ENCODE measurements at regions of chr22 and their contacts with region 1.

Region 1: GRCh38 chr22:31802575-31802974 is 48.8 kb downstream of the DEPDC5 start:
- DNase-seq: no peak
- ATAC-seq: no peak
- H3K4me3 ChIP-seq: no peak overlapping the region
- H3K27ac ChIP-seq: no peak overlapping the region
- H3K4me1 ChIP-seq: no peaks in the 10 kb centered on the region
- H3K27me3 ChIP-seq: no peaks in the 10 kb centered on the region
- CTCF ChIP-seq: no peak

Region 2: GRCh38 chr22:31768422-31769059 is 34.0 kb before region 1 on chr22:
- CTCF ChIA-PET with region 1: no interaction called
- POLR2A ChIA-PET with region 1: no interaction called
- in situ Hi-C with region 1: no loop called
- intact Hi-C with region 1: no loop called
- DNase-seq: no peak
- ATAC-seq: no peak
- H3K4me3 ChIP-seq: no peak overlapping the region
- H3K27ac ChIP-seq: no peak overlapping the region
- H3K4me1 ChIP-seq: no peaks in the 10 kb centered on the region
- H3K27me3 ChIP-seq: no peaks in the 10 kb centered on the region
- CTCF ChIP-seq: no peak

Region 3: GRCh38 chr22:31812977-31813605 is 10.5 kb after region 1 on chr22:
- CTCF ChIA-PET with region 1: no interaction called
- POLR2A ChIA-PET with region 1: interaction called, 13 read pairs
- in situ Hi-C with region 1: no loop called
- intact Hi-C with region 1: no loop called
- DNase-seq: no peak
- ATAC-seq: no peak
- H3K4me3 ChIP-seq: no peak overlapping the region
- H3K27ac ChIP-seq: no peak overlapping the region
- H3K4me1 ChIP-seq: no peaks in the 10 kb centered on the region
- H3K27me3 ChIP-seq: no peaks in the 10 kb centered on the region
- CTCF ChIP-seq: no peak

Region 4: GRCh38 chr22:31841078-31841827 is 38.7 kb after region 1 on chr22:
- CTCF ChIA-PET with region 1: no interaction called
- POLR2A ChIA-PET with region 1: no interaction called
- in situ Hi-C with region 1: no loop called
- intact Hi-C with region 1: no loop called
- DNase-seq: no peak
- ATAC-seq: no peak
- H3K4me3 ChIP-seq: no peak overlapping the region
- H3K27ac ChIP-seq: no peak overlapping the region
- H3K4me1 ChIP-seq: no peaks in the 10 kb centered on the region
- H3K27me3 ChIP-seq: no peaks in the 10 kb centered on the region
- CTCF ChIP-seq: no peak

Region 5: GRCh38 chr22:31983911-31984656 is 181.5 kb after region 1 on chr22:
- CTCF ChIA-PET with region 1: no interaction called
- POLR2A ChIA-PET with region 1: no interaction called
- in situ Hi-C with region 1: no loop called
- intact Hi-C with region 1: no loop called
- DNase-seq: no peak
- ATAC-seq: no peak
- H3K4me3 ChIP-seq: no peak overlapping the region
- H3K27ac ChIP-seq: no peak overlapping the region
- H3K4me1 ChIP-seq: no peaks in the 10 kb centered on the region
- H3K27me3 ChIP-seq: no peaks in the 10 kb centered on the region
- CTCF ChIP-seq: no peak

Measured in Panc1 (cell line).